Spleen (tissue), 13 donors: ENCODE measurements at regions of chr7 and their contacts with region 1.

Region 1: GRCh38 chr7:22657479-22657878 is 69.5 kb upstream of the IL6 start:
- DNase-seq: no peak
- H3K4me3 ChIP-seq: no peak overlapping the region
- H3K27ac ChIP-seq: peak overlapping the region in 1 of 8 donors; percentile 79
- H3K4me1 ChIP-seq: peaks cover 0 to 44% (median 16%) of the 10 kb centered on the region in 6 donors
- H3K27me3 ChIP-seq: no peaks in the 10 kb centered on the region
- CTCF ChIP-seq: peak in 5 of 11 experiments; percentile 20 to 49 (median 39)
- POLR2A ChIP-seq: no peak

Region 2: GRCh38 chr7:22726345-22727185 is 69.1 kb after region 1 on chr7:
- intact Hi-C with region 1: loop called (anchors 5 kb)
- DNase-seq: peak; percentile 84
- H3K4me3 ChIP-seq: peak overlapping the region; percentile 26 to 61 (median 36)
- H3K27ac ChIP-seq: peak overlapping the region; percentile 11 to 89 (median 76)
- H3K4me1 ChIP-seq: peaks cover 32 to 98% (median 68%) of the 10 kb centered on the region in 6 donors
- H3K27me3 ChIP-seq: peaks cover 0 to 25% (median 3%) of the 10 kb centered on the region in 7 donors
- CTCF ChIP-seq: peak in 10 of 11 experiments; percentile 39 to 72 (median 58)
- POLR2A ChIP-seq: peak in 1 of 3 donors; percentile 7

Region 3: GRCh38 chr7:23013715-23014649 is 356.5 kb after region 1 on chr7 and contains the start of gene HYCC1:
- intact Hi-C with region 1: no loop called
- DNase-seq: peak; percentile 99
- H3K4me3 ChIP-seq: peak within 1 kb of the TSS; percentile 85 to 95 (median 88)
- H3K27ac ChIP-seq: peak within 1 kb of the TSS; percentile 68 to 91 (median 90)
- H3K4me1 ChIP-seq: peaks cover 10 to 81% (median 62%) of the 10 kb centered on the region in 6 donors
- H3K27me3 ChIP-seq: no peaks in the 10 kb centered on the region
- CTCF ChIP-seq: peak; percentile 57 to 95 (median 86)
- POLR2A ChIP-seq: peak; percentile 41 to 96 (median 77)
- total RNA-seq, gene HYCC1: 40.4 to 59.0 (median 45.1) TPM